ENCODE measurements at regions of chr16 and their contacts with region 1.

Region 1: GRCh38 chr16:69132424-69133252 is at the starts of genes CHTF8 and UTP4:
- DNase-seq: peak; percentile 83
- H3K4me3 ChIP-seq: peak within 1 kb of the TSS; percentile 91 to 97
- H3K27ac ChIP-seq: peak within 1 kb of the TSS; percentile 86 to 97
- H3K4me1 ChIP-seq: peaks cover 13% of the 10 kb centered on the region
- H3K27me3 ChIP-seq: no peaks in the 10 kb centered on the region
- CTCF ChIP-seq: peak in 2 of 4 experiments; percentile 13 to 29
- POLR2A ChIP-seq: peak; percentile 81
- total RNA-seq, gene CHTF8: 124 to 171 TPM
- total RNA-seq, gene UTP4: 18.4 to 51.0 TPM

Region 2: DNA sequence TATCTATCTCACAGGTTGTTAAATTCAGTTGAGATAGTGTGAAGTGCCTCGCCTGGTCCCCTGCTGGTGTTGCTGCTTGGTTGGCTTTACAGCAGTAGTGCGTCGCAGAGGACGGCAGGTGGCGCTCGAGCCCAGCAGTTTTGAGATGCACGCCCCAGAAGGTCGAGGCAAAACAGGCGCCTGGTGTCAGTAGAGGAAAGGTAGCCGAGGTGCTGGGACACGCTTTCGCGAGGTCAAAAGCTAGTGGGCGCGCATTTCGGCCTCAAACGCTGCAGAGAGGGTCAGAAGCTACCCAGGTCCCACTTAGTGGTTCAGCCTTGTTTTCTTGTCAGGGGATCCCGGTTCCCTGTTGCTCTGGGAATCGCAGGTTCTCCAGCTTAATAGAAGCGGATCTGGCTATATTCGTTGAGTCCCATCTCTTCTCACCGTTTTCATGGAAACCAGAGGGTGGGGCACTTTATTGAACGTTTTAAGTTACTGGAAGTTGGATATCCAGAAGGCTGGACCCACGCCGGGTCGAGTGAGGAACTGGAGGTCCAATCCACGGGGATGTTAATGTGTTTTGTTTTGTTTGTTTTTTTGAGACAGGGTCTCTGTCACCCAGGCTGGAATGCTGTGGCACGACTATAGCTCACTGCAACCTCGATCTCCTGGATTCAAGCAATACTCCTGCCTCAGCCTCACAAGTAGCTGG is 603.8 kb before region 1 on chr16:
- intact Hi-C with region 1: loop called (anchors 5 kb)
- DNase-seq: peak; percentile 84
- H3K4me3 ChIP-seq: peak overlapping the region in 1 of 2 donors; percentile 9
- H3K27ac ChIP-seq: no peak overlapping the region
- H3K4me1 ChIP-seq: no peaks in the 10 kb centered on the region
- H3K27me3 ChIP-seq: no peaks in the 10 kb centered on the region
- CTCF ChIP-seq: peak; percentile 80 to 96 (median 90)
- POLR2A ChIP-seq: no peak

Region 3: GRCh38 chr16:68590201-68590994 is 542.2 kb before region 1 on chr16:
- intact Hi-C with region 1: loop called (anchors 5 kb)
- DNase-seq: peak; percentile 63
- H3K4me3 ChIP-seq: no peak overlapping the region
- H3K27ac ChIP-seq: no peak overlapping the region
- H3K4me1 ChIP-seq: no peaks in the 10 kb centered on the region
- H3K27me3 ChIP-seq: no peaks in the 10 kb centered on the region
- CTCF ChIP-seq: peak; percentile 32 to 85 (median 68)
- POLR2A ChIP-seq: no peak

Region 4: GRCh38 chr16:68848786-68849185 is 283.9 kb before region 1 on chr16:
- intact Hi-C with region 1: loop called (anchors 5 kb)
- DNase-seq: no peak
- H3K4me3 ChIP-seq: no peak overlapping the region
- H3K27ac ChIP-seq: no peak overlapping the region
- H3K4me1 ChIP-seq: no peaks in the 10 kb centered on the region
- H3K27me3 ChIP-seq: no peaks in the 10 kb centered on the region
- CTCF ChIP-seq: no peak
- POLR2A ChIP-seq: no peak

Region 5: GRCh38 chr16:69176033-69176800 is 43.6 kb after region 1 on chr16:
- intact Hi-C with region 1: no loop called
- DNase-seq: no peak
- H3K4me3 ChIP-seq: no peak overlapping the region
- H3K27ac ChIP-seq: no peak overlapping the region
- H3K4me1 ChIP-seq: peaks cover 4% of the 10 kb centered on the region
- H3K27me3 ChIP-seq: no peaks in the 10 kb centered on the region
- CTCF ChIP-seq: no peak
- POLR2A ChIP-seq: no peak

Region 6: DNA sequence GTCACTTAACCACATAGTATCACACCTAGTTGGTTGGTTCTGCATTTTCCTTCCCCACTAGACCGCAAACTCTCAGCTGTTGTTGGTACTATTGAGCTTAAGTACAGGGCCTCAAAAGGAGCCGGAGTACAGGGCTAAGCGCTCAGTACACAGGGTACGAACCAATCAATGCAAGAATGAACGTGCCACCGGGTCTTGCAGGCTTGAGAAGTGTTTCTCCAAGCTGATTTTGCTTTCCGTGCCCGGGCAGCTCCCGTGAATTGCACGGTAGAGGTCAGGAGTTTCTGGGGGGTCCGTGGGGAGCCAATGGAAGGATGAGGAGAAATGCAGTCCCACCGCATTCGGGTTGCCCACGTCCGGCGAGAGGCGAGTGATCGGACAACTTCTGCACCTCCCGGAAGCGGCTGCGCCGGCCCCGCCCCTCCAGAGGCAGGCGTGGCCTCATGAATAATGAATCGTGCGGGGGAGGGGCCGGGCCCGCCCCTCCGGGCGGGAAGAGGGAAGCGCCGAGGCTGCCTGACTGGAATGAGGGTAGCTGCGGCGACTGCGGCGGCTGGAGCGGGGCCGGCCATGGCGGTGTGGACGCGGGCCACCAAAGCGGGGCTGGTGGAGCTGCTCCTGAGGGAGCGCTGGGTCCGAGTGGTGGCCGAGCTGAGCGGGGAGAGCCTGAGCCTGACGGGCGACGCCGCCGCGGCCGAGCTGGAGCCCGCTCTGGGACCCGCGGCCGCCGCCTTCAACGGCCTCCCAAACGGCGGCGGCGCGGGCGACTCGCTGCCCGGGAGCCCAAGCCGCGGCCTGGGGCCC is 54.2 kb after region 1 on chr16 and contains the start of gene SNTB2:
- intact Hi-C with region 1: loop called (anchors 2 kb)
- DNase-seq: peak; percentile 94
- H3K4me3 ChIP-seq: peak within 1 kb of the TSS; percentile 80 to 87
- H3K27ac ChIP-seq: peak within 1 kb of the TSS; percentile 86
- H3K4me1 ChIP-seq: peaks cover 4% of the 10 kb centered on the region
- H3K27me3 ChIP-seq: no peaks in the 10 kb centered on the region
- CTCF ChIP-seq: peak in 1 of 4 experiments; percentile 15
- POLR2A ChIP-seq: peak; percentile 98
- total RNA-seq, gene SNTB2: 33.7 to 53.0 TPM

Region 7: DNA sequence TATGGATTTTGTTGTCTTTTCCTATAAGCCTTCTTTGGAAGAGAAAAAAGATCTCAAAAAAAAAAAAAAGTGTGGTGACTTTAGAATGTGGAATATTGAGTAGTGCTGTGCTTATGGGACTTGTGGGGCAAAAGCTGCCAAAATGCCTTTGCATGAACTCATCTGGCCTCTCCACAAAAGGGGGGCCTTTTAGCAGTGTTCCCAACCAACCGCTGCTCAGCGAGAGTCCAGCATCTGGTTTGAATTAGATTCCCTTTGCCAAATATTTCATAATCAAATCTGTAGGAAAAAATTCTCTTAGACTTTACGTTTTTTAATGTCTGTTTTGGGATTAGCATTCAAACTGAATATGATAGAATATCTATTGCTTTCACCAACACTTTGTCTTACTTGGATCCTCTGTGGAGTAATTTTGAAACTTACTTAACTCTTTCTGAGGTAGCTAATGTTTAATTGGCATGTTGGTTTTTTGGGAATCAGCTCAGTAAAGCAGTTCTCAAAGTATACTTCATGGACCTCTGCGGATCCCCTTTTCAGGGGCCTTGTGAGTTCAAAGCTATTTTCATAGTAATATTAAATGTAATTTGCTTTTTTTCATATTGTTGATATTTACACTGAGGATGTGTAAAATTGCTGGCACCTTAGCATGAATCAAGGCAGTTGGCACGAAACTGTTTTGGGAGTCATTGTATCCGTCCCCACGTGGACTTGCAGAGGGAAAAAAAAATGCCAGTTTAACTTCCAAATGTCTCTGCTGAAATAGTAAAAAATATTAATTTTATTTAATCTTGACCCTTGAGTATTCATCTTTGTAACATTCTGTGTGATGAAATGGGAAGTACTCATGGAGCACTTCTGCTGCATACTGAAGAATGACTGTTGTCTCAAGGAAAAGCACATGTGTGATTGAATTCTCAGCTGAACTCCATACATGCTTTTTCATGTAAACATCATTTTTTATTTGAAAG is 143.8 kb after region 1 on chr16:
- intact Hi-C with region 1: no loop called
- DNase-seq: no peak
- H3K4me3 ChIP-seq: no peak overlapping the region
- H3K27ac ChIP-seq: no peak overlapping the region
- H3K4me1 ChIP-seq: no peaks in the 10 kb centered on the region
- H3K27me3 ChIP-seq: no peaks in the 10 kb centered on the region
- CTCF ChIP-seq: no peak
- POLR2A ChIP-seq: no peak

Measured in prostate gland (tissue), 2 donors.